Activated T-helper 1 cell treated with anti-CD3 and anti-CD28 coated beads, Interleukin-12 subunit alpha, Interleukin-12 subunit beta, Interleukin-2, Interleukin-4 antibody, amounts not matched to agents 30 ng/mL and 10 ng/mL and 1 ng/mL, durations not matched to agents 14 hours and 24 hours and 36 hours (primary cell): ENCODE measurements at regions of chr18 and their contacts with region 1.

Region 1: GRCh38 chr18:48663931-48664847 is 125.4 kb downstream of the CTIF start:
- DNase-seq: peak; percentile 28
- H3K4me3 Mint-ChIP-seq: no peak overlapping the region
- H3K27ac Mint-ChIP-seq: no peak overlapping the region
- H3K4me1 Mint-ChIP-seq: no peaks in the 10 kb centered on the region
- H3K27me3 Mint-ChIP-seq: peaks cover 4% of the 10 kb centered on the region

Region 2: DNA sequence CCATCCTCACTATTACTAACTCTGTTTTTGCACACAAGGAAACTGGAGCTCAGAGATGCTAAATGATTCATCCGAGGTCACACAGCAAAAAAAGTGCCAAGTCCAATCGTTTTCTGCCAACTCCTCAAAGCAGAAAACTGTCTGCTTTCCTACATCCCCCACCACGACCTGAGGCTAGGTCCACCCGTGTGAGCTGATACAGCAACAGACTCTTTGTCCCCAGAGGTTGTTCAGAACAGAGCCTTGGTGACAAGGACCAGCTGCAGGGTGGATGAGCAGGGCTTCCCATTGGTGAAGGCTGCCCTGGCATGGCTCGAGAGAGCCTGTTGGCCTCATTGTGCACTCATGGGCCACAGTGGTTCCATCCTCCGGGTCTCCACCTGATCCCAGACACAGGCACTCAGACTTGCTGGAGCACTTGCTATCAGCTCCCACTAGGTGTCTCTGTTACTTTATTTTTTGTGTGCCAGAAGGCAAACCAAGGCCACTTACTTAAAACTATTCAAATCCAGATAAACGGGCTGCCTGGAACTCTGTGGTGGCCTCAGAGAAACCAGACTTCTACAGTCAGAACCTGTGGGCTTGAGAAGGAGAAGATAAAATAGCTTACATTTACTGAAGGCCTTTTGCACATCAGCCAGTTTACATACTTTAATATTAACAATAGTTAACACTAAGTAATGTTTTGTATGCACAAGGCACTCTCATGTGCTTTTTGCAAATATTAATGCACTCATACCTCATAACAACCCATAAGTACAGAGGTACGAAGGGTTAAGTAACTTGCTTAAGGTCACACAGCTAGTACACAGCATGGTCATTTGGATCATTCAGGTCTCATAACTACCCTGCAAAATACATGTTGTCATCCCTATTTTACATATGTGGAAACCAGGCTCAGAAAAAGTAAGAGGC is 188.3 kb before region 1 on chr18:
- intact Hi-C with region 1: loop called (anchors 1 kb)
- DNase-seq: peak; percentile 22
- H3K4me3 Mint-ChIP-seq: no peak overlapping the region
- H3K27ac Mint-ChIP-seq: no peak overlapping the region
- H3K4me1 Mint-ChIP-seq: no peaks in the 10 kb centered on the region
- H3K27me3 Mint-ChIP-seq: peaks cover 24% of the 10 kb centered on the region

Region 3: GRCh38 chr18:48538531-48539405 is 125.4 kb before region 1 on chr18 and contains the start of gene CTIF:
- intact Hi-C with region 1: loop called (anchors 5 kb)
- DNase-seq: peak; percentile 60
- H3K4me3 Mint-ChIP-seq: peak within 1 kb of the TSS; percentile 90
- H3K27ac Mint-ChIP-seq: peak within 1 kb of the TSS; percentile 58
- H3K4me1 Mint-ChIP-seq: peaks cover 14% of the 10 kb centered on the region
- H3K27me3 Mint-ChIP-seq: peaks cover 30% of the 10 kb centered on the region
- total RNA-seq, gene CTIF: 7.2 and 8.5 TPM in 2 replicates